ENCODE measurements at regions of chr17 and their contacts with region 1.

Region 1: DNA sequence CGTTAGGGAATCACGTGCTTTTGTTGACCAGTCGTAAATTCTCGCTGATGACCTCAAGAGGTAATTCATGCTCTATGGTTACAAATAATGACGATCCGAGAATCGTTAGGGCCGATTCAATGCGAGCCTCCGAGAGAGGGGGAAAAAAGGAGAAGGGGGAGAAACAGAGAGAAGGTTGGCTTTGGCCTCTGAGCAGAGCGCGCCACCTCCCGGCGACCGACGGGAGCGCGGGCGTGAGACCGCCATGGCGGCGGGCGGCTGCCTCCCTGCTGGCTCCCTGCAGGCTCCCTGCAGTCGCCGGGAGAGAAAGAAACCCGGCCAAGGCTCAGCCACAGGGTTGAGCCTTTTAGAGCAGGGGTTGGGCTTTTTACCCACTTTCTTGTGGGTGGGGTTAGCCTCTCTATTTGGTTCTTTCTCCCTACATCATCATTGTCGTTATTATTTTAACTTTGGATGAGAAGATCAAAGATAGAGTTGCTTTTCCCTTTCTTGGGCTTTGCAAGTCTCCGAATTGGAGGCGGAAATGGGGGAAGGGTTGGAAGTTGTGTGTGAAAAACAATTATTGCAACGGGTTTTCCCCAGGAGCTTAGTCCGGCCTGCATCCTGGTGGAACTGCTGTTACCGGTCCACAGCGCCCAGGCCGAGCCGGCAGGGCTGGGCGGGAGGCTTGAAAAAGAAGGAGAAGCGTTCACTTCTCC is 410 bp upstream of the HOXB5 start:
- DNase-seq: peak; percentile 82 to 86 (median 86)
- H3K4me3 ChIP-seq: peak overlapping the region in 6 of 7 experiments; percentile 43 to 97 (median 74)
- H3K27ac ChIP-seq: no peak overlapping the region
- H3K4me1 ChIP-seq: peaks cover 4 to 83% (median 61%) of the 10 kb centered on the region in 4 experiments
- H3K27me3 ChIP-seq: peaks cover 0 to 32% (median 4%) of the 10 kb centered on the region in 5 experiments

Region 2: GRCh38 chr17:48335858-48336500 is 258.0 kb before region 1 on chr17:
- CTCF ChIA-PET with region 1: interaction called, 31 read pairs
- POLR2A ChIA-PET with region 1: interaction called, 3 read pairs
- DNase-seq: peak; percentile 69 to 79 (median 71)
- H3K4me3 ChIP-seq: peak overlapping the region in 1 of 7 experiments; percentile 50
- H3K27ac ChIP-seq: no peak overlapping the region
- H3K4me1 ChIP-seq: peaks cover 0 to 3% (median 0%) of the 10 kb centered on the region in 4 experiments
- H3K27me3 ChIP-seq: no peaks in the 10 kb centered on the region

Region 3: DNA sequence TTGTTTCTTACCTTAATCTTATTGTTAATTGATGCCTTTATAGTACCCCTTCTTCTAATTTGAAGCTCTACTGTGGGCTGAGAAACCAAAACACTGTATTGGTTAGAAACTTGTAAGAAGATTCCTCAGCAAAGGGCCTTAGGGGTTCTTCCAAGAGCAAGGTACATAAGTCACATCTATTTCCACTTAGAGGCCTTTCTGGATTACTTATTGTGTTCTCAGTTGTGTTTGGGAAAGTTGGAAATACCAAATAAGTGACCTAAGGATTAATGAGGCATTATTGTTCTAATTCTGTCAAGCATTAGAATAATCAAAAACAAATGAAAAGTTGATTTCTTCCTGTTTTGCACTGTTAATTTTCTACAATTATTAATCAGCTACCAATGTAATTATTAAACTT is 249.7 kb before region 1 on chr17:
- CTCF ChIA-PET with region 1: interaction called, 12 read pairs
- POLR2A ChIA-PET with region 1: no interaction called
- DNase-seq: no peak
- H3K4me3 ChIP-seq: no peak overlapping the region
- H3K27ac ChIP-seq: no peak overlapping the region
- H3K4me1 ChIP-seq: no peaks in the 10 kb centered on the region
- H3K27me3 ChIP-seq: no peaks in the 10 kb centered on the region

Region 4: GRCh38 chr17:48351831-48352332 is 242.1 kb before region 1 on chr17:
- CTCF ChIA-PET with region 1: interaction called, 22 read pairs
- POLR2A ChIA-PET with region 1: no interaction called
- DNase-seq: peak; percentile 54 to 63 (median 62)
- H3K4me3 ChIP-seq: no peak overlapping the region
- H3K27ac ChIP-seq: no peak overlapping the region
- H3K4me1 ChIP-seq: peaks cover 0 to 3% (median 0%) of the 10 kb centered on the region in 4 experiments
- H3K27me3 ChIP-seq: no peaks in the 10 kb centered on the region

Region 5: DNA sequence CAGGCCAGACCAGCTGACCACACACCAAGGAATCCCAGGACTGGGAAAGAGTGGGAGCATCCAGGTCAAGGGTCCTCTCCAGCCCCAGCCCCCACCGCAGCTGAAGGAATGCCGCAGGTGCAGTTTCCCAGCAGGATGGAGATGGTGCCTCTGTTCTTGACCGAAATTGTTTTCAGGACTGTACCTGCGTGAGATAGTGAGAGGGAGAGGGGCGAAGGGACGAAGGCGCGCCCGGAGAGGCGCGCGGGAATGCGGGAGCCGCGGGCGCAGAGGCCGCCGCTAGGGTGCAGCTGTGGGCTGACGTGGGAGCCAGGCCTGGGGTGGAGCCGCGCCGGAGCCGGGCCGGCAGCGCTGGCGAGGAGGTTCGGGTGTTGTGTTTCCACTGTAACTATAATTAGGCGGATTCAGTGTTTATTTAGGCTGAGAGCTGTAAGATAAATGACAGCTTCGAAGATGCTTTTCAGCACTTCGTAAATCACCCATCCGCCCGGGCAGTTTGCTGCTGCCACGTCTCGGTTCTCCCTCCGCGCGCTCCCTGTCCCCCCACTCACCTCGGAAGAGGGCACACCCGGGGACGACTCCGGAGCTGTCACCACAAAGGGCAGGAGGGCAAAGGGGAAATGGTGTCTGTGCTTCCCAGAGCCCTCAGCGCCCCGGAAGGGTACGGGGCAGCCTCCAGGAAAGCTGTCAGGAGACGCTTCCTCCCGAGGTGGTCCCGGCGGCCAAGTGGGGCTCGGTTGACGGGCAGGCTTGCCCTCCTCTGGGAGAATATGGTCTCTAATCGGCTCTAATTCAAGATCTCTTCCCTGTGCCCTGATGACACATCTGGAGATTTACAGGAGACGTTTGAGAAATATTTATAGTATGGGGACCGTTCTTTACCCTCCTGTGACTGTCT is 101.3 kb before region 1 on chr17:
- CTCF ChIA-PET with region 1: interaction called, 15 read pairs
- POLR2A ChIA-PET with region 1: no interaction called
- DNase-seq: peak; percentile 52 to 67 (median 58)
- H3K4me3 ChIP-seq: peak overlapping the region; percentile 2 to 79 (median 51)
- H3K27ac ChIP-seq: peak overlapping the region in 1 of 2 experiments; percentile 58
- H3K4me1 ChIP-seq: peaks cover 4 to 54% (median 46%) of the 10 kb centered on the region in 4 experiments
- H3K27me3 ChIP-seq: no peaks in the 10 kb centered on the region

Region 6: DNA sequence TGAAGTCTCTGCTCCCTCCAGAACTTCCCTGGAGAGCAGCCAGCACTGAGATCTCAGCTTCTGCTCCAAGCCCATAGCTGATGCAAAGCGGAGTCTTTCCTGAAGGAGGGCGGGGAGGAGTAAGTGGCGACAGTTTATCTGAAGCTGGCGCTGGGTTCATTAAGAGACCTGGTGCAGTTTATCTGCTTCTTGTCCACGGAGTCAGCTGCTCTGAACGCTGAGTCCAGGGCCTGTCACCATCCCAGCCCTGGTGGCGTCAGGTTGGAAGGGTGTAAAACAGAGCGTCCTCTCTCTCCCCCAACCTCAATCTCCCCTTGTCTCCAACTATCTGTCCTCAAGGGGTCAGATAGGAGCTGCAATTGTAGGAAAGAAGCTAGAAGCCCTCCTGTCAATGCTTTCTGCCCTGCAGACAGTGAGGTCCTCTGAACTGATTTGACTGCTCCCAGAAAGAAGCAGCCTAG is 93.0 kb before region 1 on chr17:
- CTCF ChIA-PET with region 1: interaction called, 15 read pairs
- POLR2A ChIA-PET with region 1: no interaction called
- DNase-seq: peak; percentile 70 to 80 (median 79)
- H3K4me3 ChIP-seq: no peak overlapping the region
- H3K27ac ChIP-seq: no peak overlapping the region
- H3K4me1 ChIP-seq: peaks cover 0 to 9% (median 7%) of the 10 kb centered on the region in 4 experiments
- H3K27me3 ChIP-seq: no peaks in the 10 kb centered on the region